A673 (cell line): ENCODE measurements at regions of chr10 and their contacts with region 1.

Region 1: GRCh38 chr10:28839600-28840007 is 162.3 kb downstream of the BAMBI start:
- DNase-seq: no peak
- H3K4me3 ChIP-seq: no peak overlapping the region
- H3K27ac ChIP-seq: no peak overlapping the region
- H3K4me1 ChIP-seq: no peaks in the 10 kb centered on the region
- H3K27me3 ChIP-seq: no peaks in the 10 kb centered on the region
- CTCF ChIP-seq: no peak

Region 2: DNA sequence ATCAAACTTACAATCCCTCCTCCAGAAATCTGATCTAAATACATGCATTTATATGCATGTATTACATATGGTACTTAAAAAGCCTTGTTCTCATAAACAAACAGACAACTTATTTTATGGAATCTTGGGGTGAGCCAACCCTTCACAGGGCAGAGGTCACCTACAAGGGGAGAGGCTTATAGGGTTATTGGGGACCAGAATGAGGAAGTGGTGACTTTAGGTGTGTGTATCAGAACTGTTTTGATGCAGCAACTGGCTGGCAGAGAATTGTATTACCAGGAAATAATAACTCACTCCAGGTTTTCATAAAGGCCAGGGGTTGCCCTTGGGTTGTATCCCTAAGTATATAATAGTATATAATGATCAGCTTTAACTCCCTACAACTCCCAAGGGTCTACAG is 704.1 kb after region 1 on chr10:
- CTCF ChIA-PET with region 1: no interaction called
- POLR2A ChIA-PET with region 1: interaction called, 10 read pairs
- intact Hi-C with region 1: no loop called
- DNase-seq: peak; percentile 27
- H3K4me3 ChIP-seq: no peak overlapping the region
- H3K27ac ChIP-seq: no peak overlapping the region
- H3K4me1 ChIP-seq: peaks cover 15% of the 10 kb centered on the region
- H3K27me3 ChIP-seq: no peaks in the 10 kb centered on the region
- CTCF ChIP-seq: no peak